ENCODE measurements at regions of chr12 and their contacts with region 1.

Region 1: GRCh38 chr12:64890873-64891468 is 66.5 kb downstream of the TBC1D30 start:
- DNase-seq: peak in 1 of 2 experiments; percentile 57
- H3K4me3 ChIP-seq: no peak overlapping the region
- H3K27ac ChIP-seq: no peak overlapping the region; the same call in 1 of the 2 replicates
- H3K4me1 ChIP-seq: peaks cover 21% of the 10 kb centered on the region
- H3K27me3 ChIP-seq: no peaks in the 10 kb centered on the region
- CTCF ChIP-seq: peak; percentile 88

Region 2: GRCh38 chr12:64801381-64801780 is 89.6 kb before region 1 on chr12:
- CTCF ChIA-PET with region 1: interaction called, 3 read pairs
- POLR2A ChIA-PET with region 1: no interaction called
- intact Hi-C with region 1: loop called (anchors 1 kb)
- DNase-seq: no peak
- H3K4me3 ChIP-seq: no peak overlapping the region
- H3K27ac ChIP-seq: no peak overlapping the region
- H3K4me1 ChIP-seq: peaks cover 22% of the 10 kb centered on the region
- H3K27me3 ChIP-seq: no peaks in the 10 kb centered on the region
- CTCF ChIP-seq: peak; percentile 36

Region 3: GRCh38 chr12:65106948-65107347 is 216.0 kb after region 1 on chr12:
- CTCF ChIA-PET with region 1: interaction called, 3 read pairs
- POLR2A ChIA-PET with region 1: no interaction called
- intact Hi-C with region 1: loop called (anchors 1 kb)
- DNase-seq: no peak
- H3K4me3 ChIP-seq: no peak overlapping the region
- H3K27ac ChIP-seq: no peak overlapping the region
- H3K4me1 ChIP-seq: no peaks in the 10 kb centered on the region
- H3K27me3 ChIP-seq: no peaks in the 10 kb centered on the region
- CTCF ChIP-seq: peak; percentile 65

Region 4: DNA sequence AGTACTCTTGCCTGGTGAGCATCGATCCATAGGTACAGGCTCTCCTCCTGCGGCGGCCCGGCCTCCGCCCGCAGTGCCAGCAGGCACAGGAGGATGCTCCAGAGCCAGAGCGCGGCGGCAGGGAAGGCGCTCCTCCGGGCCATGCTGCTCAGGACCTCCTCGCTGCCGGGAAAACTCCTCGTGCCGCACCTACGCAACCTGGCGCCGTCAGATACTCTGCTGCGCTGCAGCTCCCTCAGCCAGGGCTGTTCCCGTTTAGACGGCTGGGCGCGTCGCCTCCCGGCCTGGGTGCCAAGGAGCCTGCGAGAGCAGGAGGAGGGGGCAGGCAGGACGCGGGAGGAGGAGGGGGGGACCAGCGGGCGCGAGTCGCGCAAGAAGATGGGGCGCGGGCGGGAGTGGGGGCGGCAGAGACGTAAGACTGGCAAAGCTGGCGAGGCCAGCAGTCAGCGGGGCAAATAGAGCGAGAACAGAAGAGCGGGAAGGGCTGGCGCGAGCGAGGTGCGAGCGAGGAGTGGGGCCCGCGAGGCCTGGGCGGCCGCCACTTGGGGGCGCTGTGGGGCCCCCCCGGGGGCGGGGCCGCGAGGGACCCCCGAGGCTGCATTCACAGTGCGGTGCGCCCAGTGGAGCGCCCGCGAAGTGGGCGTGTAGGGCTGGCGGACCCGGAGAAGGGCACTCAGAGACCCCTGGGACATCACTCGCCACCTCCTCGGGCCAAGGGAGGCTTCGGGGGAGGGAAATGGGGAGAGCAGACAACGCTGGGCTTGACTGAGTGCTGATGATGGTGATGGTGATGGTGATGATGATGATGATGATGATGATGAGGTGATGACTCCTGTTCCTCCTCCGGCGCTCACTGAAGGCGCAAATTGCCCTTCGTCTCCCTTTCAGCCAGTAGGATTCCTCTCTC is 230.3 kb after region 1 on chr12 and contains the start of gene WIF1:
- CTCF ChIA-PET with region 1: interaction called, 4 read pairs
- POLR2A ChIA-PET with region 1: no interaction called
- intact Hi-C with region 1: loop called (anchors 1 kb)
- DNase-seq: peak in 1 of 2 experiments; percentile 23
- H3K4me3 ChIP-seq: no peak within 1 kb of the TSS
- H3K27ac ChIP-seq: no peak within 1 kb of the TSS
- H3K4me1 ChIP-seq: no peaks in the 10 kb centered on the region
- H3K27me3 ChIP-seq: no peaks in the 10 kb centered on the region
- CTCF ChIP-seq: no peak
- total RNA-seq, gene WIF1: not detected in 2 replicates

Region 5: GRCh38 chr12:65232476-65233077 is 341.6 kb after region 1 on chr12:
- CTCF ChIA-PET with region 1: no interaction called
- POLR2A ChIA-PET with region 1: no interaction called
- intact Hi-C with region 1: loop called (anchors 2 kb)
- DNase-seq: no peak
- H3K4me3 ChIP-seq: no peak overlapping the region
- H3K27ac ChIP-seq: no peak overlapping the region
- H3K4me1 ChIP-seq: peaks cover 6% of the 10 kb centered on the region; the same call in 1 of the 2 replicates
- H3K27me3 ChIP-seq: no peaks in the 10 kb centered on the region
- CTCF ChIP-seq: peak; percentile 63

Region 6: GRCh38 chr12:65278576-65279368 is 387.8 kb after region 1 on chr12 and contains the start of gene MSRB3:
- CTCF ChIA-PET with region 1: no interaction called
- POLR2A ChIA-PET with region 1: no interaction called
- intact Hi-C with region 1: loop called (anchors 5 kb)
- DNase-seq: peak in 1 of 2 experiments; percentile 51
- H3K4me3 ChIP-seq: peak within 1 kb of the TSS; percentile 82
- H3K27ac ChIP-seq: no peak within 1 kb of the TSS
- H3K4me1 ChIP-seq: peaks cover 4% of the 10 kb centered on the region; the same call in 1 of the 2 replicates
- H3K27me3 ChIP-seq: peaks cover 18% of the 10 kb centered on the region; the same call in 1 of the 2 replicates
- CTCF ChIP-seq: no peak; the same call in 1 of the 2 replicates
- total RNA-seq, gene MSRB3: 0.55 and 1.2 TPM in 2 replicates

Region 7: DNA sequence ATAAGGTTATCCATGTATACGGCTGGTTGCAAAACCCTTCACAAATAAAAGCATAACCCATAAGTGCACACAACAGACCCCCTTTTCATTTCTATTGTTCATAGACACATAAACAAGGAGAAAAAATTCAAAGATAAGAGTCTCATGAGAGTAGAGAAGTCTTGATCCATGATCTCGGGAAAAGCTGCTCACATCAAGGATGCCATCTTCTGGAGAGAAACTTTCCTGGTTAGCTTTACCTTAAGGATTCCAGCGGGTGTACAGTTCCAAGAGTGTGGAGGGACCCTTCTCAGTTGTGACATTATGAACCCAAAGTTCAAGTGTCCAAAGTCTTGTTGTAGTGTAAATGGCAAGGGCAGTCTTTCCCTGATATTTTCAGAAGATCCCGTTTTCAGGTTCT is 1095.1 kb after region 1 on chr12:
- CTCF ChIA-PET with region 1: no interaction called
- POLR2A ChIA-PET with region 1: no interaction called
- intact Hi-C with region 1: loop called (anchors 2 kb)
- DNase-seq: peak in 1 of 2 experiments; percentile 32
- H3K4me3 ChIP-seq: no peak overlapping the region
- H3K27ac ChIP-seq: no peak overlapping the region
- H3K4me1 ChIP-seq: no peaks in the 10 kb centered on the region
- H3K27me3 ChIP-seq: no peaks in the 10 kb centered on the region
- CTCF ChIP-seq: no peak